ENCODE measurements at regions of chr5 and their contacts with region 1.

Region 1: DNA sequence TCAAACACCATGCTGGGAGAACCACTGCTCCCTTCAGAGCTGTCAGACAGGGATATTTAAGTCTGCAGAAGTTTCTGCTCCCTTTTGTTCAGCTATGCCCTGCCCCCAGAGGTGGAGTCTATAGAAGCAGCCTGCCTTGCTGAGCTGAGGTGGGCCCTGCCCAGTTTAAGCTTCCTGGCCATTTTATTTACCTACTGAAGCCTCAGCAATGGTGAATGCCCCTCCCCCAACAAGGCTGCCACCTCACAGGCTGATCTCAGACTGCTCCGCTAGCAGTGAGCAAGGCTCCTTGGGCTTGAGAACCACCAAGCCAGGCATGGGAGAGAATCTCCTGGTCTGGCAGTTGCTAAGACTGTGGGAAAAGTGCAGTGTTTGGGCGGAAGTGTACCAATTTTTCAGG is 205.5 kb upstream of the PTGER4 start:
- DNase-seq: no peak

Region 2: GRCh38 chr5:40437452-40437861 is 36.8 kb before region 1 on chr5:
- intact Hi-C with region 1: no loop called
- DNase-seq: no peak

Region 3: GRCh38 chr5:40518511-40518967 is 44.3 kb after region 1 on chr5:
- intact Hi-C with region 1: no loop called
- DNase-seq: no peak

Region 4: DNA sequence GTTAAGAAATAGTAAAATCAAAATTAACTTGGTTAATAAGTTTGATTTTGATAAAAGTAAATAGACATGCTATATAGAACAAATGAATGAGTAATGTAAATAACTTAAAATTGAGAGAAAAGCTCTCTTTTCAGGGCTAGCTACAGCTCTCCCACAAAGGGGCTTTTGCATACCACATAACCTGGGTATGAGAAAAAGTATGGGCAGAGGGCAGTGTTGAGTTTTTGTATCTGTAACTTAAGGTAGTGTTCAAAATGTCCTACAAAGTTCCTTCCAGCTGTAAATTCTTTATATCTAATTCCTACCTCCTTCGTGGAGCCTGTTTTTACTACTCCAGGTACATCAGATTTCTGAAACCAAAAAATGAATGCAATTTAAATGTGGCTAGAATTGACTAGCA is 300.4 kb after region 1 on chr5:
- intact Hi-C with region 1: loop called in 1 of 2 experiments (anchors 5 kb)
- DNase-seq: no peak

Measured in posterior vena cava (tissue), 2 donors.